Activated CD4-positive, alpha-beta T cell treated with anti-CD3 and anti-CD28 coated beads for 36 hours (primary cell): ENCODE measurements at regions of chr14 and their contacts with region 1.

Region 1: DNA sequence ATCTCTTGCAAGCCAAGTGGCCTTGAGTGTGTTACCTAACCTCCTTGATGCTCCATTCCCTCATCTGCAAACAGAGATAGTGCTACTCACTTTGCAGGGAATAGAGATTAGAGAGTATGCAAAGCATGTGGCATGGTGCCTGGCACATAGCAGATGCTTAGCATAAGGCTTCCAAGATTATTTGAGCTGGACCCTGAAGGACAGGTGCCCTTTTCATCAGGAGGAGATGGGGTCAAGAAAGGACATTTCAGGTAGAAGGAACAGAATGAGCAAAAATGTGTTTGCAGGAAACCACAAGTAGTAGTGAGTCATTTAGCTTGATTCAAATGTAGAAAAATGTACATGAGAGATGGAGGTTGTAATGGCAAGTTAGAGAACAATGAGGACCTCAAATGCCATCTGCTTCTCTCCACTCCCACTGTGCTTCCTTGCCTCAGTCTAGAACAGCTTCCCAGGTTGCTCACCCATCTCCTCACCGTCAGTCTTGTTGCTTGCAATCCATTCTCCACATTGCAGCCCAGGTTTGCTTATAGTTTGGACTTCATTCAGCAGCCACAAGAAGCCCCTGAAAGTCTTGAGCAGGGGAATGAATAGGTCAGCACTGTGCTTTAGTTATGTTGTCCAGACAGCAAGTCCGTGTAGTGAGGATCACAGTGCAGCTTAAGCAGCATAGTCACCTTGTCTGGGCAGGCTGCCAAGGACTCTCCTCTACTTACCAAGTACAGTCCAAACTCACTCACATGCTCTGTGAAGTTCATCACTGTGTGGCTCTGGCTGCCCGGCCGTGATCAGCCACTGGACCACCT is 536.3 kb upstream of the CCDC196 start:
- DNase-seq: peak; percentile 77
- ATAC-seq: peak; percentile 92
- H3K4me3 Mint-ChIP-seq: no peak overlapping the region
- H3K27ac Mint-ChIP-seq: peak overlapping the region; percentile 63
- H3K4me1 Mint-ChIP-seq: peaks cover 35% of the 10 kb centered on the region
- H3K27me3 Mint-ChIP-seq: peaks cover 12% of the 10 kb centered on the region

Region 2: GRCh38 chr14:65003394-65003793 is 946.5 kb before region 1 on chr14:
- CTCF ChIA-PET with region 1: no interaction called
- POLR2A ChIA-PET with region 1: no interaction called
- intact Hi-C with region 1: loop called in 1 of 2 experiments (anchors 10 kb)
- DNase-seq: no peak
- ATAC-seq: peak; percentile 86
- H3K4me3 Mint-ChIP-seq: no peak overlapping the region
- H3K27ac Mint-ChIP-seq: peak overlapping the region; percentile 35
- H3K4me1 Mint-ChIP-seq: peaks cover 46% of the 10 kb centered on the region
- H3K27me3 Mint-ChIP-seq: no peaks in the 10 kb centered on the region